Mammary epithelial cell (primary cell): ENCODE measurements at regions of chr14 and their contacts with region 1.

Region 1: DNA sequence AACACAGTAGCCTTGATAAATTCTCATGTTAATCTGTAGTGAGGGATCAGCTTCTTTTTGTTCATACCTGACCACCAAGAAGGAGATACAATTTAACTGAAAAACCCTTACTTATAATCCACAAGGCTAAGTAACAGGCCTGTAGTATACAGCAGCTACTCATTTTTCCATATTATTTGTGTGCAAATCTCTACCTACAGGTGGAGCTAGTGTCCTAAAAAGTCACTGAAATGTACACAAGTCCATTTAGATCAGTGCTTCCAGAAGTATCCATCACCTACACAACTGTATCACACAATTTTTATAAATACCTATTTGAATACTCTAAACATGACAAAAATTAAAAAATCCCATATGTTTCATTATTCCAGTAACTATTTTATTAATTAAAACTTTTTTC is 173.2 kb downstream of the SLC35F4 start:
- DNase-seq: peak; percentile 41
- H3K4me3 ChIP-seq: no peak overlapping the region
- H3K27ac ChIP-seq: no peak overlapping the region
- H3K4me1 ChIP-seq: no peaks in the 10 kb centered on the region
- H3K27me3 ChIP-seq: no peaks in the 10 kb centered on the region
- CTCF ChIP-seq: peak; percentile 65 to 68

Region 2: GRCh38 chr14:57486767-57487379 is 205.8 kb before region 1 on chr14:
- CTCF ChIA-PET with region 1: no interaction called
- dilution Hi-C with region 1: no loop called
- in situ Hi-C with region 1: no loop called
- intact Hi-C with region 1: loop called (anchors 5 kb)
- DNase-seq: peak; percentile 32
- H3K4me3 ChIP-seq: no peak overlapping the region
- H3K27ac ChIP-seq: no peak overlapping the region
- H3K4me1 ChIP-seq: no peaks in the 10 kb centered on the region
- H3K27me3 ChIP-seq: no peaks in the 10 kb centered on the region
- CTCF ChIP-seq: peak; percentile 69 to 74

Region 3: GRCh38 chr14:57871459-57872080 is 178.9 kb after region 1 on chr14:
- CTCF ChIA-PET with region 1: no interaction called
- dilution Hi-C with region 1: no loop called
- in situ Hi-C with region 1: loop called (anchors 5 to 25 kb)
- intact Hi-C with region 1: loop called (anchors 1 kb)
- DNase-seq: peak; percentile 33
- H3K4me3 ChIP-seq: no peak overlapping the region
- H3K27ac ChIP-seq: no peak overlapping the region
- H3K4me1 ChIP-seq: no peaks in the 10 kb centered on the region
- H3K27me3 ChIP-seq: peaks cover 5% of the 10 kb centered on the region
- CTCF ChIP-seq: peak; percentile 72 to 86

Region 4: GRCh38 chr14:57889245-57889644 is 196.6 kb after region 1 on chr14:
- CTCF ChIA-PET with region 1: no interaction called
- dilution Hi-C with region 1: no loop called
- in situ Hi-C with region 1: loop called in 1 of 2 experiments (anchors 25 kb)
- intact Hi-C with region 1: no loop called
- DNase-seq: peak; percentile 50
- H3K4me3 ChIP-seq: no peak overlapping the region
- H3K27ac ChIP-seq: no peak overlapping the region
- H3K4me1 ChIP-seq: no peaks in the 10 kb centered on the region
- H3K27me3 ChIP-seq: no peaks in the 10 kb centered on the region
- CTCF ChIP-seq: no peak

Region 5: DNA sequence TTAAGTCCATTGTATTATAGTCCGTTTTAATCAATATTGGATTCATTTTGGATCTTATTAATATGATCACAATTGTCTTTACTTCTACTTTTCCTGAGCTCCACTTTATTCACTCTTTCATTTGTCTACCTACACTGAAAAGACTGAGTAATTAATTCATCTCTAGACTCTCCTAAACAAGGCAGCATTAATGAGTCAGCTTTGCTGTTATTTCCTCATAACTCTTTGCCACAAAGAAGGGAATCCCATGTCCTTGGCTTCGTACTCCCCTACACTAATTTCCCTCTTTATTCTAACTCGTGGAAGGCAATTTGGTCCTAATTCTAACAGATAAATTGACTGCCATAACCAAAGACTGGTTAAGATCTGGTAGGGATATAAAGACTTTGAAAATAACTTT is 367.4 kb after region 1 on chr14:
- CTCF ChIA-PET with region 1: no interaction called
- dilution Hi-C with region 1: no loop called
- in situ Hi-C with region 1: loop called in 1 of 2 experiments (anchors 10 kb)
- intact Hi-C with region 1: no loop called
- DNase-seq: peak; percentile 28
- H3K4me3 ChIP-seq: no peak overlapping the region
- H3K27ac ChIP-seq: no peak overlapping the region
- H3K4me1 ChIP-seq: no peaks in the 10 kb centered on the region
- H3K27me3 ChIP-seq: no peaks in the 10 kb centered on the region
- CTCF ChIP-seq: no peak